Naive thymus-derived CD4-positive, alpha-beta T cell (primary cell): ENCODE measurements at regions of chr2 and their contacts with region 1.

Region 1: GRCh38 chr2:230924470-230925341 is at the start of gene GPR55:
- DNase-seq: peak in 7 of 9 donors; percentile 27 to 68 (median 39)
- ATAC-seq: peak; percentile 78
- H3K4me3 ChIP-seq: peak within 1 kb of the TSS; percentile 63
- H3K4me3 Mint-ChIP-seq: peak within 1 kb of the TSS; percentile 80 to 89 (median 86)
- H3K27ac ChIP-seq: peak within 1 kb of the TSS; percentile 58
- H3K27ac Mint-ChIP-seq: peak within 1 kb of the TSS; percentile 58 to 92 (median 86)
- H3K4me1 ChIP-seq: peaks cover 5 to 11% of the 10 kb centered on the region in 2 donors
- H3K4me1 Mint-ChIP-seq: peaks cover 28 to 50% (median 38%) of the 10 kb centered on the region in 7 donors
- H3K27me3 ChIP-seq: no peaks in the 10 kb centered on the region
- H3K27me3 Mint-ChIP-seq: peaks cover 0 to 30% (median 0%) of the 10 kb centered on the region in 5 donors
- total RNA-seq, gene GPR55: 1.3 to 8.8 (median 2.5) TPM

Region 2: GRCh38 chr2:230902180-230902899 is 22.4 kb before region 1 on chr2:
- CTCF ChIA-PET with region 1: interaction called, 7 read pairs
- POLR2A ChIA-PET with region 1: no interaction called
- intact Hi-C with region 1: loop called (anchors 1 to 2 kb)
- DNase-seq: peak in 4 of 9 donors; percentile 22 to 49 (median 32)
- ATAC-seq: peak; percentile 71
- H3K4me3 ChIP-seq: no peak overlapping the region
- H3K4me3 Mint-ChIP-seq: no peak overlapping the region
- H3K27ac ChIP-seq: no peak overlapping the region
- H3K27ac Mint-ChIP-seq: peak overlapping the region in 1 of 9 donors; percentile 21
- H3K4me1 ChIP-seq: peaks cover 6 to 13% of the 10 kb centered on the region in 2 donors
- H3K4me1 Mint-ChIP-seq: peaks cover 2 to 25% (median 23%) of the 10 kb centered on the region in 7 donors
- H3K27me3 ChIP-seq: no peaks in the 10 kb centered on the region
- H3K27me3 Mint-ChIP-seq: peaks cover 0 to 46% (median 6%) of the 10 kb centered on the region in 5 donors

Region 3: GRCh38 chr2:230956827-230957755 is 32.4 kb after region 1 on chr2:
- CTCF ChIA-PET with region 1: no interaction called
- POLR2A ChIA-PET with region 1: no interaction called
- intact Hi-C with region 1: no loop called
- DNase-seq: no peak
- ATAC-seq: peak; percentile 67
- H3K4me3 ChIP-seq: peak overlapping the region; percentile 24
- H3K4me3 Mint-ChIP-seq: peak overlapping the region; percentile 81 to 91 (median 84)
- H3K27ac ChIP-seq: no peak overlapping the region
- H3K27ac Mint-ChIP-seq: peak overlapping the region in 1 of 9 donors; percentile 78
- H3K4me1 ChIP-seq: peaks cover 3 to 6% of the 10 kb centered on the region in 2 donors
- H3K4me1 Mint-ChIP-seq: peaks cover 10 to 18% (median 14%) of the 10 kb centered on the region in 7 donors
- H3K27me3 ChIP-seq: peaks cover 0 to 9% of the 10 kb centered on the region in 2 donors
- H3K27me3 Mint-ChIP-seq: peaks cover 56 to 73% (median 61%) of the 10 kb centered on the region in 5 donors

Region 4: GRCh38 chr2:230974096-230974913 is 49.6 kb after region 1 on chr2:
- CTCF ChIA-PET with region 1: no interaction called
- POLR2A ChIA-PET with region 1: no interaction called
- intact Hi-C with region 1: loop called in 1 of 2 experiments (anchors 5 kb)
- DNase-seq: peak in 5 of 9 donors; percentile 9 to 69 (median 25)
- ATAC-seq: peak; percentile 95
- H3K4me3 ChIP-seq: peak overlapping the region; percentile 34
- H3K4me3 Mint-ChIP-seq: peak overlapping the region in 8 of 10 donors; percentile 3 to 63 (median 44)
- H3K27ac ChIP-seq: no peak overlapping the region
- H3K27ac Mint-ChIP-seq: peak overlapping the region; percentile 48 to 91 (median 71)
- H3K4me1 ChIP-seq: peaks cover 13 to 23% of the 10 kb centered on the region in 2 donors
- H3K4me1 Mint-ChIP-seq: peaks cover 10 to 20% (median 14%) of the 10 kb centered on the region in 7 donors
- H3K27me3 ChIP-seq: no peaks in the 10 kb centered on the region
- H3K27me3 Mint-ChIP-seq: peaks cover 0 to 42% (median 0%) of the 10 kb centered on the region in 5 donors

Region 5: GRCh38 chr2:230987137-230988020 is 62.7 kb after region 1 on chr2:
- CTCF ChIA-PET with region 1: interaction called, 3 read pairs
- POLR2A ChIA-PET with region 1: no interaction called
- intact Hi-C with region 1: loop called (anchors 2 kb)
- DNase-seq: peak; percentile 54 to 86 (median 68)
- ATAC-seq: peak; percentile 87
- H3K4me3 ChIP-seq: peak overlapping the region; percentile 59
- H3K4me3 Mint-ChIP-seq: peak overlapping the region; percentile 19 to 68 (median 47)
- H3K27ac ChIP-seq: no peak overlapping the region
- H3K27ac Mint-ChIP-seq: peak overlapping the region in 1 of 9 donors; percentile 40
- H3K4me1 ChIP-seq: peaks cover 4 to 11% of the 10 kb centered on the region in 2 donors
- H3K4me1 Mint-ChIP-seq: peaks cover 0 to 34% (median 3%) of the 10 kb centered on the region in 7 donors
- H3K27me3 ChIP-seq: no peaks in the 10 kb centered on the region
- H3K27me3 Mint-ChIP-seq: peaks cover 6 to 37% (median 13%) of the 10 kb centered on the region in 5 donors

Region 6: GRCh38 chr2:231124838-231125568 is 200.3 kb after region 1 on chr2 and contains the start of gene HTR2B:
- CTCF ChIA-PET with region 1: no interaction called
- POLR2A ChIA-PET with region 1: no interaction called
- intact Hi-C with region 1: no loop called
- DNase-seq: peak in 4 of 9 donors; percentile 10 to 30 (median 17)
- ATAC-seq: no peak
- H3K4me3 ChIP-seq: no peak within 1 kb of the TSS
- H3K4me3 Mint-ChIP-seq: peak within 1 kb of the TSS; percentile 9 to 81 (median 58)
- H3K27ac ChIP-seq: no peak within 1 kb of the TSS
- H3K27ac Mint-ChIP-seq: peak within 1 kb of the TSS; percentile 0 to 70 (median 29)
- H3K4me1 ChIP-seq: peaks cover 0 to 21% of the 10 kb centered on the region in 2 donors
- H3K4me1 Mint-ChIP-seq: peaks cover 14 to 47% (median 31%) of the 10 kb centered on the region in 7 donors
- H3K27me3 ChIP-seq: no peaks in the 10 kb centered on the region
- H3K27me3 Mint-ChIP-seq: no peaks in the 10 kb centered on the region
- total RNA-seq, gene HTR2B: not detected